ENCODE measurements at regions of chr16 and their contacts with region 1.

Region 1: GRCh38 chr16:73058221-73058615 is 10.3 kb upstream of the ZFHX3 start:
- DNase-seq: no peak
- ATAC-seq: no peak
- H3K4me3 ChIP-seq: peak overlapping the region; percentile 93
- H3K27ac ChIP-seq: peak overlapping the region; percentile 55; the same call in 1 of the 2 replicates
- H3K4me1 ChIP-seq: peaks cover 53% of the 10 kb centered on the region
- H3K27me3 ChIP-seq: no peaks in the 10 kb centered on the region
- CTCF ChIP-seq: no peak

Region 2: DNA sequence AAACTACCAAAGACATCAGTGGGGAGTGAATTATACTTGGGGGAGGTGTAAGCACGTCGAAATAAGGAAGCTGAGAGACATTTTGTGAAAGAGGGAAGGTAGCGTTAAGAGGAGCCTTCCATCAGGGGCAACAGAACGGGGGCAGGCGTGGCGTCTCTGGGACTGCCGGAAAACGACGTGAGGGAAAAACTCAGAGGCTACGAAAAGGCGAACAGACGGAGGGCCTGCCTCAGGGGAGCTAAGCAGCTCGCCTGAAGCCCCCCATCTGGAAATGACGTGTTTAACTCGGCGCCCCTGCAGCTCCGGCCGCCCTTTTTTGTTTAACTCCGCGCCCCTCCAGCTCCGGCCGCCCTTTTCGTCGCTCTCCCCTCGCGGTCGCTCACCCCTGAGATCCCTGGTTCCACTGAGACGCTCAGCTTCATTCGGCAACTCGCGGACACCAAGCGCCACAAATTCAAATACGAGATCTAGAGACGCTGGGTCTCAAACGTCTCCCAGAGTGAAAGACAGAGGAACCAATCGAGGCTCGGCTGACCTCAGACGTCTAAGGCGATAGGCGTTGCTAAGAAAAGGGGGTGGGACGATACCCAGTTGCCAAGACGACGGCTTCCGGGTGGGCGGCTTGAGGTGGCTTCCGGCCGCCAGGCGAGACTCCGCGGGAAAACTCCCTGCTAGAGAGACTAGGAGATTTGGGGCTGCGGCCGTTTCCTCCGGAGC is 393.6 kb before region 1 on chr16:
- CTCF ChIA-PET with region 1: no interaction called
- POLR2A ChIA-PET with region 1: no interaction called
- intact Hi-C with region 1: loop called (anchors 10 kb)
- DNase-seq: peak; percentile 94
- ATAC-seq: peak; percentile 100
- H3K4me3 ChIP-seq: peak overlapping the region; percentile 91
- H3K27ac ChIP-seq: peak overlapping the region; percentile 54
- H3K4me1 ChIP-seq: peaks cover 4% of the 10 kb centered on the region; the same call in 1 of the 2 replicates
- H3K27me3 ChIP-seq: no peaks in the 10 kb centered on the region
- CTCF ChIP-seq: no peak

Region 3: GRCh38 chr16:72787514-72788268 is 270.5 kb before region 1 on chr16:
- CTCF ChIA-PET with region 1: interaction called, 14 read pairs
- POLR2A ChIA-PET with region 1: no interaction called
- intact Hi-C with region 1: no loop called
- DNase-seq: peak; percentile 70
- ATAC-seq: peak; percentile 79
- H3K4me3 ChIP-seq: peak overlapping the region; percentile 56
- H3K27ac ChIP-seq: peak overlapping the region; percentile 63
- H3K4me1 ChIP-seq: peaks cover 17% of the 10 kb centered on the region
- H3K27me3 ChIP-seq: no peaks in the 10 kb centered on the region
- CTCF ChIP-seq: no peak

Region 4: GRCh38 chr16:73082608-73083007 is 24.4 kb after region 1 on chr16:
- CTCF ChIA-PET with region 1: interaction called, 3 read pairs
- POLR2A ChIA-PET with region 1: interaction called, 10 read pairs
- intact Hi-C with region 1: loop called (anchors 2 kb)
- DNase-seq: peak; percentile 82
- ATAC-seq: peak; percentile 76
- H3K4me3 ChIP-seq: no peak overlapping the region
- H3K27ac ChIP-seq: peak overlapping the region; percentile 44
- H3K4me1 ChIP-seq: no peaks in the 10 kb centered on the region
- H3K27me3 ChIP-seq: no peaks in the 10 kb centered on the region
- CTCF ChIP-seq: no peak

Region 5: DNA sequence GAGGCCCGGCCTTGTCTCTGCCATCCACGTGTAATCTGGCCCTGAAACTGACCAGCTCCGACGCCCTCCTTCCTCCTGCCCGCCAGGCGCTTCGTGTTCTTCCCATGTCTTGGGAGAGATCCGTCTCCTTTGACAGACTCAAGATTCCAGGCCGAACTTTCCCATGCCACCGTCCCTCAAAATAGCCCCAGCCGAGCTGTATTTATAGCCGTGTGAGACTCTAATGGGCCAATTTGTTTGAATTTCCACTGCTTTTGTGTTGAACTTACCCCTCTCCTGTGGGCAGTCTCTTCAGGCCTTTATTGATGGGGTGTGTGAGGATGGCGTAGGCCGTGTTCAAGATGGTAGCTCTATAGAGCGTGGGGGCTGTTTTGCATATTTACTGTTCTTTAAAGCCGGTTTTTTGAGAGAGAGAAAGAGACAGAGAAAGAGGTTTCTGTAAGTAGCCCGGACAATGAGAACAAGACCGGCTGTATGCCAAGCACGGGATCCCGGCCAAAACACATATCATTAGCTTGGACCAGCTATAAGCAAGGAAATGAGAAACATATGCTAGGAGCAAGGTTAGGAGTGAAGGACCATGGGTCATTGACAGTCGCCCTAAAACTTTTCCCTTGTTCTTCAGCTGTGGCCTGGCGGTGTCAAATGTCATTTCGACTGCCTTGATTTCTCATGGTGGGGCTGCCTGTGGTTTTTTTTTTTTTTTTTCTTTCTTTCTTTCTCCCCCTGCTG is 114.2 kb after region 1 on chr16:
- CTCF ChIA-PET with region 1: interaction called, 12 read pairs
- POLR2A ChIA-PET with region 1: no interaction called
- intact Hi-C with region 1: no loop called
- DNase-seq: peak; percentile 65
- ATAC-seq: peak; percentile 66
- H3K4me3 ChIP-seq: no peak overlapping the region
- H3K27ac ChIP-seq: no peak overlapping the region
- H3K4me1 ChIP-seq: peaks cover 13% of the 10 kb centered on the region
- H3K27me3 ChIP-seq: no peaks in the 10 kb centered on the region
- CTCF ChIP-seq: no peak; the same call in 1 of the 2 replicates